Activated CD8-positive, alpha-beta T cell treated with anti-CD3 and anti-CD28 coated beads for 36 hours (primary cell): ENCODE measurements at regions of chr6 and their contacts with region 1.

Region 1: DNA sequence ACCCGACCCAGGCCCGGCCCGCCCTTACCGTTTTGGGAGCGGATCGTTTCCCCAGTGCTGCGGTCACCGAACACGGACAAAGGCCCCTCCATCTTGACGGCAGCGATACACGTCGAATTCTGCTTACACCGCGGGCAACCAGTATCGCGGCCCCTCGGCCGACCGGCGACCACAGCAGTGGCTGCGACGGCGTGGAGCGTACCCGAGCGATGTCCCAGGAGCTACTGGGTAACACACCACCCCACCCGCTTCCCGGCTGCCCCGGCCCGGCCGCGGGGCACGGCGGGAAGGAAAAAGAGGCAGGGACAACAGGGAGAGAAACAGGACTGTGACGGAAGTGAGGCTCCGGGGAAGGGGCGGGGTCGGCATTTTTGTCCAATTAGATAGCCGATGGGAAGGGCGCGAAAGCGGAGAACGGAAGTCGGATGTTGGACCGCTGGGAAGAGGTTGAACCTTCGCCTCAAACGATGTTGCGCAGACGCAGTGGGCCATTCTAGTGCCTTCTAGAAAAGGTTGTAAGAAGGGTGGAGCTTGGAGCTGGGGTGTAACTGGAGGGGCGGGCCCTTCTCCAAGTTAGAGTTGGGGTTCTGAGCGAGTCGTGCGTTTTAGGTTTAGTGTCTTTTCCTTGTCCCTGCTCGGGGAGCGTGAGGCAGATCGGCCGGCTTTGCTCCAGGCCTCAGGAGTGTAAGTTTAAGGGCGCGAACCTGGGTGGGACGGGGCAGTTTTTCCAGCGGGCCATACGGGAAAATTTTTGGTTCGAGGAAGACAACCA is at the start of gene TCP1:
- DNase-seq: peak; percentile 100
- ATAC-seq: peak; percentile 87
- H3K4me3 Mint-ChIP-seq: peak within 1 kb of the TSS; percentile 98
- H3K27ac Mint-ChIP-seq: peak within 1 kb of the TSS; percentile 99
- H3K4me1 Mint-ChIP-seq: peaks cover 58% of the 10 kb centered on the region
- H3K27me3 Mint-ChIP-seq: no peaks in the 10 kb centered on the region
- CTCF ChIP-seq: no peak
- total RNA-seq, gene TCP1: 446 to 452 TPM

Region 2: GRCh38 chr6:159693128-159693893 is 96.3 kb before region 1 on chr6 and contains the start of gene SOD2:
- CTCF ChIA-PET with region 1: interaction called, 21 read pairs
- POLR2A ChIA-PET with region 1: interaction called, 40 read pairs
- intact Hi-C with region 1: loop called (anchors 5 kb)
- DNase-seq: peak; percentile 85
- ATAC-seq: peak; percentile 81
- H3K4me3 Mint-ChIP-seq: peak within 1 kb of the TSS; percentile 88
- H3K27ac Mint-ChIP-seq: peak within 1 kb of the TSS; percentile 93
- H3K4me1 Mint-ChIP-seq: peaks cover 33% of the 10 kb centered on the region
- H3K27me3 Mint-ChIP-seq: no peaks in the 10 kb centered on the region
- CTCF ChIP-seq: no peak
- total RNA-seq, gene SOD2: 95.5 to 105 TPM

Region 3: GRCh38 chr6:159726918-159727716 is 62.4 kb before region 1 on chr6 and contains the start of gene WTAP:
- CTCF ChIA-PET with region 1: interaction called, 7 read pairs
- POLR2A ChIA-PET with region 1: interaction called, 38 read pairs
- intact Hi-C with region 1: loop called (anchors 2 kb)
- DNase-seq: peak; percentile 97
- ATAC-seq: peak; percentile 93
- H3K4me3 Mint-ChIP-seq: peak within 1 kb of the TSS; percentile 85
- H3K27ac Mint-ChIP-seq: peak within 1 kb of the TSS; percentile 95
- H3K4me1 Mint-ChIP-seq: peaks cover 44% of the 10 kb centered on the region
- H3K27me3 Mint-ChIP-seq: no peaks in the 10 kb centered on the region
- CTCF ChIP-seq: no peak
- total RNA-seq, gene WTAP: 79.9 to 80.6 TPM

Region 4: DNA sequence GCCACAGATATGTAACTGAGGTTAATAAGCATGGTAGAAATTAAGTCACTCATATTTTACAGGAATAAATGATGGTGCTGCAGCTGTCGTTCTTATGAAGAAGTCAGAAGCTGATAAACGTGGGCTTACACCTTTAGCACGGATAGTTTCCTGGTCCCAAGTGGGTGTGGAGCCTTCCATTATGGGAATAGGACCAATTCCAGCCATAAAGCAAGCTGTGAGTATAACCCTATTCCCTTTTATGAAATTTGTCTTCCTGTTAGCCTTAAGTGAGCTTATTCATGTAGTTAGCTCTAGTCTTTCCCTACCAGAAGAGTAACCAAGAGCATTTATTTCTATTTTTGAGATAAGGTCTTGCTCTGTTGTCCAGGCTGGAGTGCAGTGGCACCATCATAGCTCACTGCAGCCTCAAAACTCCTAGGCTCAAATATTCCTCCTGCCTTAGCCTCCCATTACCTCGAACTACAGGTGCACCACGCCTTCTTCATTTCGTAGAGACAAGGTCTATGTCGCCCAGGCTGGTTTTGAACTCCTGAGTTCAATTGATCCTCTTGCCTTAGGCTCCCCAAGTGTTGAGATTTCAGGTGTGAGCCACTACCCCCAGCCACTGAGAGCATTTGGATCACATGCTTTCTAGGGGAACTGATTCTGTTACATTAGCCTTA is 12.2 kb before region 1 on chr6:
- CTCF ChIA-PET with region 1: interaction called, 4 read pairs
- POLR2A ChIA-PET with region 1: interaction called, 39 read pairs
- intact Hi-C with region 1: no loop called
- DNase-seq: no peak
- ATAC-seq: no peak
- H3K4me3 Mint-ChIP-seq: no peak overlapping the region
- H3K27ac Mint-ChIP-seq: peak overlapping the region; percentile 17
- H3K4me1 Mint-ChIP-seq: peaks cover 6% of the 10 kb centered on the region
- H3K27me3 Mint-ChIP-seq: no peaks in the 10 kb centered on the region
- CTCF ChIP-seq: no peak

Region 5: DNA sequence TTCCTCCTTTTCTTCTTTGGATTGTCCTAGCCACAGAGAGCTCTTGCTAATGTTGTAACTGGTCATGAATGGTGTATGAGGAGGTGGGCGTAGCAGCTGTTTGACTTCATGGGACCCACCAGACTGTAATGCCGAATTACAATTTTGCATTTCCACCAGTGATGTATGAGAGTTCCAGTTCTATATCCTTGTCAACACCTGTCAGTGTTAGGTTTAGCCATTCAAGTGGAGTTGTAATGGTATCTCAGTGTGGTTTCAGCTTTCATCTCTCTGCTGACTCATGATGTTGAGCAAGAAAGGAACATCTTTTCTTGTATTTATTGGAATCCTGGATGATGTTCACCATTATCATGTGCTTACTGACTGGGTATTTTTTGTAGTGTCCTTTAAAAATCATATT is 184.4 kb after region 1 on chr6:
- CTCF ChIA-PET with region 1: no interaction called
- POLR2A ChIA-PET with region 1: interaction called, 11 read pairs
- intact Hi-C with region 1: loop called (anchors 2 kb)
- DNase-seq: peak; percentile 62
- ATAC-seq: peak; percentile 49
- H3K4me3 Mint-ChIP-seq: peak overlapping the region; percentile 39
- H3K27ac Mint-ChIP-seq: peak overlapping the region; percentile 84
- H3K4me1 Mint-ChIP-seq: peaks cover 81% of the 10 kb centered on the region
- H3K27me3 Mint-ChIP-seq: no peaks in the 10 kb centered on the region
- CTCF ChIP-seq: no peak